Activated CD8-positive, alpha-beta T cell treated with anti-CD3 and anti-CD28 coated beads for 36 hours (primary cell): ENCODE measurements at regions of chr2 and their contacts with region 1.

Region 1: GRCh38 chr2:196750982-196751635 is 48.4 kb downstream of the GTF3C3 start:
- DNase-seq: peak; percentile 82
- ATAC-seq: peak; percentile 80
- H3K4me3 Mint-ChIP-seq: no peak overlapping the region
- H3K27ac Mint-ChIP-seq: no peak overlapping the region
- H3K4me1 Mint-ChIP-seq: no peaks in the 10 kb centered on the region
- H3K27me3 Mint-ChIP-seq: no peaks in the 10 kb centered on the region
- CTCF ChIP-seq: peak; percentile 68

Region 2: GRCh38 chr2:196500684-196501431 is 250.3 kb before region 1 on chr2:
- CTCF ChIA-PET with region 1: no interaction called
- POLR2A ChIA-PET with region 1: no interaction called
- intact Hi-C with region 1: no loop called
- DNase-seq: no peak
- ATAC-seq: no peak
- H3K4me3 Mint-ChIP-seq: no peak overlapping the region
- H3K27ac Mint-ChIP-seq: no peak overlapping the region
- H3K4me1 Mint-ChIP-seq: no peaks in the 10 kb centered on the region
- H3K27me3 Mint-ChIP-seq: peaks cover 5% of the 10 kb centered on the region
- CTCF ChIP-seq: no peak

Region 3: GRCh38 chr2:196544034-196544433 is 207.1 kb before region 1 on chr2:
- CTCF ChIA-PET with region 1: no interaction called
- POLR2A ChIA-PET with region 1: no interaction called
- intact Hi-C with region 1: no loop called
- DNase-seq: no peak
- ATAC-seq: no peak
- H3K4me3 Mint-ChIP-seq: no peak overlapping the region
- H3K27ac Mint-ChIP-seq: no peak overlapping the region
- H3K4me1 Mint-ChIP-seq: no peaks in the 10 kb centered on the region
- H3K27me3 Mint-ChIP-seq: peaks cover 10% of the 10 kb centered on the region
- CTCF ChIP-seq: no peak

Region 4: GRCh38 chr2:196719110-196719872 is 31.8 kb before region 1 on chr2:
- CTCF ChIA-PET with region 1: interaction called, 10 read pairs
- POLR2A ChIA-PET with region 1: no interaction called
- intact Hi-C with region 1: no loop called
- DNase-seq: no peak
- ATAC-seq: no peak
- H3K4me3 Mint-ChIP-seq: no peak overlapping the region
- H3K27ac Mint-ChIP-seq: no peak overlapping the region
- H3K4me1 Mint-ChIP-seq: no peaks in the 10 kb centered on the region
- H3K27me3 Mint-ChIP-seq: no peaks in the 10 kb centered on the region
- CTCF ChIP-seq: no peak

Region 5: GRCh38 chr2:196767101-196767500 is 16.0 kb after region 1 on chr2:
- CTCF ChIA-PET with region 1: interaction called, 39 read pairs
- POLR2A ChIA-PET with region 1: interaction called, 3 read pairs
- intact Hi-C with region 1: no loop called
- DNase-seq: no peak
- ATAC-seq: no peak
- H3K4me3 Mint-ChIP-seq: no peak overlapping the region
- H3K27ac Mint-ChIP-seq: no peak overlapping the region
- H3K4me1 Mint-ChIP-seq: no peaks in the 10 kb centered on the region
- H3K27me3 Mint-ChIP-seq: no peaks in the 10 kb centered on the region
- CTCF ChIP-seq: no peak

Region 6: GRCh38 chr2:197092431-197092830 is 341.3 kb after region 1 on chr2:
- CTCF ChIA-PET with region 1: no interaction called
- POLR2A ChIA-PET with region 1: no interaction called
- intact Hi-C with region 1: no loop called
- DNase-seq: no peak
- ATAC-seq: no peak
- H3K4me3 Mint-ChIP-seq: no peak overlapping the region
- H3K27ac Mint-ChIP-seq: peak overlapping the region; percentile 70
- H3K4me1 Mint-ChIP-seq: peaks cover 13% of the 10 kb centered on the region
- H3K27me3 Mint-ChIP-seq: no peaks in the 10 kb centered on the region
- CTCF ChIP-seq: no peak